Colonic mucosa (tissue), 4 donors: ENCODE measurements at regions of chrX and their contacts with region 1.

Region 1: DNA sequence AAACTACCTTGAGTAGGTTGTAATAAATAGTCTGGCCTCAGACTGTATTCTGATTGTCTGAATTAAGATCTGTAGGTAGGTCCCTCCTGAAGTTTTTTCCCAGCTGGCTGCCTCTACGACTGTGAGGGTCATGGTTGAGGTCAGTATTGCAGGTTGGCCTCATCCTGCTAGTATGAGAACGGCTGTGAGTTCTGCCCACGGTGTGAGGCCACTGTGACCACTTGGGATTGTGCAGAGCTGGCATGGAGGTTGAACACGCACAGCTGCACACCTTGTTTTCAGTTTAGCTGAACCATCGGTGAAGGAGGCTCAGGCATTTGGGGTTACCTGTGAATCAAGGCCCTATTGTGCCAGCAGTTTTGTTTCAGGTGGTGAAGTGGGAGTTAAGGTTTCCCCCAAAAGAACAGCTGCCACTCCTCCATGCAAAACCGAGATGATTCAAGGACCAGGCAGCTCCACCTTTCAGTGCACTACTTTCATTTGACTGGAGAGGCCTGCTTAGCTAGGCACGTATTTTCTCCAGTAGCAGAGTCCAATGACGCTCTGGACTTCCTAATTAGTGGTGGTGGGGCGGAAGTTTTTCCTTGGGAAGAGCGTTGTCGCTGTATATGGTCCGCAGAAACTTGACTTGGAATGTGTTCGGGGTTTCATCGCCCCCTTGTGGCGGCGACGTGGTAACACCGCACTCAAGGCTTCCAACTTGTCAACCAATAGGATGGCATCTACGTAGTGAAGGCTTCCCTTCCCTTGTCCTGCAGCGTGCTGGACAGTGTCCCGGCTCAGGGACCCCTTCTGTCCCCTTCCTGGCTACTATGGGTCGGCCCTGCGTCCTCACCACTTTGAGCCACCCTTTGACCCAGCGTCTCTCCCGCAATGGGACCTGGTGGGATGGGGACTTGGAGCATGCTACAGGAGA is 13.8 kb downstream of the CMC4 start:
- DNase-seq: peak; percentile 70
- H3K4me3 ChIP-seq: no peak overlapping the region
- H3K27ac ChIP-seq: no peak overlapping the region
- H3K4me1 ChIP-seq: no peaks in the 10 kb centered on the region
- H3K27me3 ChIP-seq: no peaks in the 10 kb centered on the region
- CTCF ChIP-seq: peak; percentile 77

Region 2: GRCh38 chrX:154596290-154596929 is 460.7 kb before region 1 on chrX:
- intact Hi-C with region 1: no loop called
- DNase-seq: no peak
- H3K4me3 ChIP-seq: no peak overlapping the region
- H3K27ac ChIP-seq: no peak overlapping the region
- H3K4me1 ChIP-seq: no peaks in the 10 kb centered on the region
- H3K27me3 ChIP-seq: no peaks in the 10 kb centered on the region
- CTCF ChIP-seq: no peak

Region 3: GRCh38 chrX:154986826-154987576 is 70.1 kb before region 1 on chrX:
- intact Hi-C with region 1: loop called (anchors 5 kb)
- DNase-seq: no peak
- H3K4me3 ChIP-seq: no peak overlapping the region
- H3K27ac ChIP-seq: no peak overlapping the region
- H3K4me1 ChIP-seq: no peaks in the 10 kb centered on the region
- H3K27me3 ChIP-seq: no peaks in the 10 kb centered on the region
- CTCF ChIP-seq: no peak

Region 4: DNA sequence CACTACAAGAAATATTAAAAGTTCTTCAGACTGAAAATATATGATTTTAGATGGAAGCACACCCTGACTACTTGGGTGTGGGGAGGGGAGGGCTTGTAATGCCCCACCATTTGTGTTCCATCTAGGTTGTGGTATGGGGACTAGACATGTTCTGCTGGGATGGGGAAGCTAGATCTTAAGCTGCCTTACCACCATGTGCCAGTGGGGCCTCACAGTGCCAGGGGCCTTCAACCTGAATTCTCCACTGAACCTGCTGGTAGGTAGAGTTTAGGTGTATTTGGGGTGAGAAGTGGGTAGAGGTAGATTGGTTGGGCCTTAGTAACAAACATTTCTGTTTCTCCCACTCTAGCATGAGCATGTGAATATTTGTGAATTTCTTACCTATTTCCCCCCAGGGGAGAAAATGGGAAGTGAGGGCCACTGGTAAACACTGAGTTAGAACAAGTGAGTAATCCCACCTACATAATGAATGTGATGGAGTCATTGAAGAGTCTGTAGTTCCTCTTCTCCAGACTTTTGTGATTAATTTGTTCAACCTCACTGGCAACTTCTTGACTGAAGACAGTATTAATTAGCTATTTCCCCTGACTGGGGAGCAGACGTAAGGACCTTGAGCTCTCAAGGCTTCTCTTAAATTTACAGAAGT is 58.2 kb after region 1 on chrX:
- intact Hi-C with region 1: no loop called
- DNase-seq: no peak
- H3K4me3 ChIP-seq: no peak overlapping the region
- H3K27ac ChIP-seq: no peak overlapping the region
- H3K4me1 ChIP-seq: no peaks in the 10 kb centered on the region
- H3K27me3 ChIP-seq: no peaks in the 10 kb centered on the region
- CTCF ChIP-seq: no peak